Sigmoid colon (tissue), 7 donors: ENCODE measurements at regions of chr7 and their contacts with region 1.

Region 1: DNA sequence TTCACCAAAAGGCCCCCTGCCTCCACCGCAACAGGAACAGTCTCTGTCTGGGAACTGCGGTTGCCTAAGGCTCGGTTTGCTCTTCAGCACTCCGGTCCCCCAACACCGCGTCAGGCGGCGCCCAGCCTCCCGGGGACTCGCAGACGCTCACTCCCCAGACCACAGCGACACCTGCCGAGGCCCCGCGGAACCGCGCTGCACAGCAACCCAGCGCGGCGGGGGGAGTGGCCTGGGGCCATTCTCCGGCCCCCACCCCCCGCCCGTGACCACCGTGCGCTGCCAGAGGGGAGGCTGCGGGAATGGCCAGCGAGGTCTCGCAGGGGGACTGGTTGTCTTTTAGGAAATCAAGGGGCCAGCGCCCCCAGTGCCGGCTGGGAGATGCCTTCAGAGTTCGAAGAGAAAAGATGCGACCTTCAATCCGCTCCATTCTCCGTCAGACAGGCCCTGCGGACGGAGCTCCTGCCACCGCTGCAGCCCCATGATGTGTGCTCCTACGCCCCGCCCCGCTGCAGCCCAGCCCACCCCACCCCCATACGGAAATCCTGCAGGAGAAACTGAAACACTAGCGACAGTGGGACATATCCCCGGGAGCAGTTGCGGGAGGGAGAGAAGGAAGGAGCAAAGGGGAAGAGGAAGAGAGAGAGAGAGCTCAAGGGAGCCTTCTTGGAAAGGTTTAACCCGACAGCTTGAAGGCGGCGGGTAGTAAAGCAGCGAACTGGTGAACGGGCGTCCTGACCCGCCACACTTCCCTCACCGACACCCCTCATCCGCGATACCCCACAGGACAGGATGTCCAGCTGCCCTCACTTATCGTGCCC is 137.4 kb upstream of the CDCA7L start:
- DNase-seq: peak; percentile 94
- H3K4me3 ChIP-seq: peak overlapping the region; percentile 52 to 73 (median 60)
- H3K27ac ChIP-seq: peak overlapping the region; percentile 79 to 88 (median 84)
- H3K4me1 ChIP-seq: peaks cover 0 to 14% (median 6%) of the 10 kb centered on the region in 4 donors
- H3K27me3 ChIP-seq: peaks cover 0 to 13% (median 0%) of the 10 kb centered on the region in 3 donors
- CTCF ChIP-seq: peak; percentile 81 to 96 (median 90)
- EP300 ChIP-seq: peak in 1 of 4 donors; percentile 35
- POLR2A ChIP-seq: no peak

Region 2: DNA sequence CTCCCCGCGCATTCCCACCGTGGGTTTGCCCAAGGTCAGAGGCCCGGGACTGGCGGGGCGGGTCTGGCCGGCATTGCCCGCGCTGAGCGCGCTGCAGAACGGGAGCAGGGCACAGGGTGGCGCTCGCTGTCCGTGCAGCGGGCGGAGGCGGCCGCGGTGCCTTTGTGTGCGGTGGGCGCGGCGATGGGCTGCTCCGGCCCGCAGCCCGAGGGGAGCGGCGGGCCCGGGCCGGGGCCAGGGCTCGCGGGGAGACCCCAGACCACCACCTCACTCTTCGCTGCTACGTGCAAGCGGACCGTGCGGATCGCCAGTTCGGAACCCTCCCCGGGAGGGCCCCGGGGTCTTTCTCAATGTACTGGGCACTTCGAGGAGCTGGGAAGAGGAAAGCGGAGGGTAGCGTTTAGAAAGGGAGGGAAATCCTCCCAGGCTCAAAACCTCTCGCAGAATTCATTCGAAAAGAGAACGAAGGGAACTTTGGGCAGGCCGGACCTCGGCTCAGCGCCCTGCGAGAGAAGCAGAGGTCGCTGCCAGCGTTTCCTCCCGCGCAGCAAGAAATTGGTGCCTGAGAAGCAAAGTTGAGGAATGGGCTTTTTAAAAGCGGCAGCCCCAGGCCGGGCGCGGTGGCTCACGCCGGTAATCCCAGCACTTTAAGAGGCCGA is 1304.9 kb before region 1 on chr7:
- intact Hi-C with region 1: loop called (anchors 5 kb)
- DNase-seq: no peak
- H3K4me3 ChIP-seq: peak overlapping the region in 3 of 4 donors; percentile 6 to 31 (median 31)
- H3K27ac ChIP-seq: no peak overlapping the region
- H3K4me1 ChIP-seq: peaks cover 0 to 12% (median 11%) of the 10 kb centered on the region in 4 donors
- H3K27me3 ChIP-seq: peaks cover 37 to 99% (median 84%) of the 10 kb centered on the region in 3 donors
- CTCF ChIP-seq: peak in 1 of 4 experiments; percentile 56
- EP300 ChIP-seq: no peak
- POLR2A ChIP-seq: no peak

Region 3: DNA sequence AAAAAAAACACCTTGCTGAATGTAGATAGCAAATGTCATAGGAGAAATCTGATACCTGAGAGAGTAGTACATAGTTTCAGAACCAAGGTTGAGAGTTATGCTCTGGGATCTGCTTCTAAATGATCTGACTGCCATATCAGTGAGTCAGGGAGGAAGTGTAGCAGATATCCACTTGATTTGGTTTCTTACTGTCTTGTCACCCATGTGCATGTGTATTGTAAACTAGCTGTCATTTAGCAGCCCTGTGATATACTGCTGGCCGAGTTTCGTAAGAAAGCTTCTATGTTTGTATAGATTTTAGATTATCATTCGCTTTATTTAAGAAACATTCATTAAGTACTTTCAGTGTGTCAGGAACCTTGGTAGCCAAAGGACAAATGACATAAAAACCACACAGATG is 613.2 kb before region 1 on chr7:
- intact Hi-C with region 1: no loop called
- DNase-seq: no peak
- H3K4me3 ChIP-seq: no peak overlapping the region
- H3K27ac ChIP-seq: no peak overlapping the region
- H3K4me1 ChIP-seq: peaks cover 0 to 4% (median 0%) of the 10 kb centered on the region in 4 donors
- H3K27me3 ChIP-seq: no peaks in the 10 kb centered on the region
- CTCF ChIP-seq: no peak
- EP300 ChIP-seq: no peak
- POLR2A ChIP-seq: no peak